K562 (cell line): ENCODE measurements at regions of chr12 and their contacts with region 1.

Region 1: DNA sequence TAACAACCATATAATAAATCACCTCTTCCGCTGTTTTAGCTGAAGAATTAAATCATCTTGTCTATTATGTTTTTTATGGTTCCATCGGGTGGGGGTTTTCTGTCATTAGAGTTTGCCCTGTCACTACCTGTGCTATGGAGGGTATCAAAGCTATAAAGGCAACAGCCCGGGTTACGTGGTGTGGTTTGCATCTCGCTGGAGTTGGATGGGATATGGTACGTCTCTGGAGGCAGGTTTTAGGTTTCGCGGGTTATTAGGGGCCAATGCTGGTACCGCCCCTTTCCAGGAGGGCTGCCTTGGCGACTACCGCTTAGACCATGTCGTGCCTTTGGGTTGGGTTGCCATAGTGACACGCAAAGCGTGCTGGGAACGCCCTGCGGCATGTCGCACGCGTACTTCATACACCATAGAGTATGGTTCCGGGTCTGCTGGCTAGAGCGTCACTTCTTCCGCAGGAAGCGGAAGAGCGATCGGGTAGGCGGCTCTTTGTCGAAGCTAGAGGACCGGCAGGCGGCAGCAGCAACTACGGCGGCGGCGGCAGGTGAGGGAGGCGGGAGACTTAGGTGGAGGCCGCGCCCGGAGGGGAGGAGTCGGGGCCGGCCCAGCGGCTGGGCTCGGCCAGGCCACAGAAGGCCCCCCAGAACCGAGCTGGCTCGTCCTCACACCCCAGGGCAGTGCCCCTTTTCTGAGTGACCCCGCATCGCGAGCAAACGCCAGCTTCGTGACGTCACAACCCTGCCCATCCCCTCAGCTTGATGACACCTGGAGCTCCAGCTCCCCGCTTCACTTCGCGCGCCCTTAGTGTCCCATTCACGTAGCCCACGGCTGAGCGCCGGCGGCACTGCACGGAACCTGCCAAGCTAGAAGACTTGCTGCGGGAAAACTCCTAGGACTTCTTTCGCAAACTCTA is at the start of gene ZC3H10:
- DNase-seq: peak; percentile 87 to 100 (median 90)
- ATAC-seq: peak; percentile 88
- H3K4me3 ChIP-seq: peak within 1 kb of the TSS; percentile 59
- H3K27ac ChIP-seq: peak within 1 kb of the TSS; percentile 97
- H3K4me1 ChIP-seq: peaks cover 16 to 17% of the 10 kb centered on the region in 2 experiments
- H3K27me3 ChIP-seq: no peaks in the 10 kb centered on the region
- CTCF ChIP-seq: peak; percentile 70 to 79 (median 71)
- EP300 ChIP-seq: peak; percentile 69
- POLR2A ChIP-seq: peak; percentile 99
- RAD21 ChIP-seq: peak; percentile 14 to 44; a peak in 3 of 4 replicates
- polyA plus RNA-seq, gene ZC3H10: 0.31 to 0.46 TPM

Region 2: GRCh38 chr12:56071648-56072047 is 46.4 kb before region 1 on chr12:
- CTCF ChIA-PET with region 1: no interaction called
- POLR2A ChIA-PET with region 1: interaction called, 11 read pairs
- in situ Hi-C with region 1: no loop called
- intact Hi-C with region 1: no loop called
- DNase-seq: no peak
- ATAC-seq: no peak
- H3K4me3 ChIP-seq: no peak overlapping the region
- H3K27ac ChIP-seq: no peak overlapping the region
- H3K4me1 ChIP-seq: no peaks in the 10 kb centered on the region; a peak in 1 of 5 replicates
- H3K27me3 ChIP-seq: no peaks in the 10 kb centered on the region
- CTCF ChIP-seq: no peak
- EP300 ChIP-seq: no peak
- POLR2A ChIP-seq: no peak
- RAD21 ChIP-seq: no peak

Region 3: GRCh38 chr12:56127888-56128669 is 10.0 kb after region 1 on chr12 and contains the start of gene ESYT1:
- CTCF ChIA-PET with region 1: no interaction called
- POLR2A ChIA-PET with region 1: interaction called, 74 read pairs
- in situ Hi-C with region 1: no loop called
- intact Hi-C with region 1: no loop called
- DNase-seq: peak; percentile 95 to 100 (median 97)
- ATAC-seq: peak; percentile 89
- H3K4me3 ChIP-seq: peak within 1 kb of the TSS; percentile 92
- H3K27ac ChIP-seq: peak within 1 kb of the TSS; percentile 93
- H3K4me1 ChIP-seq: peaks cover 31 to 46% of the 10 kb centered on the region in 2 experiments
- H3K27me3 ChIP-seq: no peaks in the 10 kb centered on the region
- CTCF ChIP-seq: peak in 2 of 3 experiments; percentile 3 to 14; a peak in 2 of 6 replicates
- EP300 ChIP-seq: no peak; the same call in none of the 2 replicates
- POLR2A ChIP-seq: peak; percentile 94
- RAD21 ChIP-seq: peak in 1 of 2 experiments; percentile 23; a peak in 2 of 4 replicates
- polyA plus RNA-seq, gene ESYT1: 156 to 194 TPM

Region 4: DNA sequence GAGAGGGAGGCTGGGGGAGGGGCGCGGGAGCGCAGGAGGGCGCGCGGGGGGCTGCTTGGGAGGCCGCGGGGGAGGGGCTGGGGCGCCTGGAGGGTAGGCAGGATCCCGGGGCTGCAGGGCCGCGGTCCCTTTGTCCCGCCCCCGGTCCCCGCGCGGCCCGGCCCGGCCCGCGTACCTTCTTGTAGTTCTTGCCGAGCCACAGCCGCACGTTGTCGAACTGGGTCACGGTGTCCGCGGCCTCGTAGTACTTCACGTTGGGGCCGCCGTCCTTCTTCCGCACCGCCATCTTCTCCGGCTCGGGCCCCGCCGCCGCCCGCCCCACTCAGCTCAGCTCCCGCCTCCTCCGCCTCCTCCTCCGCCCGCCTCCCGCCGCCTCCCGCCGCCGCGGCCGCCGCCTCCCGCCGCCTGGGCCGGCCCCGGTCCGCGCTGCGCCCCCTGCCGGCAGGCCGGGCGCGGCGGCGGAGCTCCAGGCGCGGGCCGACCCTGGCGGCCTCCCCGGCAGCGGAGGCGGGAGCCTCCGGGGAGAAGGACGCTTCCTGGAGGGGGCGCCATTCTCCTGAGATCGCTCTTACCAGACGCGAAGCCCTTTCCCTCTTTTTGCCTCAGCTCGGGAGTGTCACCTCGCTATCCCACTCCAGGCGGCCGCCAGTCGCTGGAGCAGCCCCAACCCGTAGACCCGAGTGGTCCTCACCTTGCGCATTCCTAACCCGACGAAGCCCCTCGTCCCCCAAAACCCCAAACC is 71.3 kb after region 1 on chr12 and contains the start of gene SMARCC2:
- CTCF ChIA-PET with region 1: interaction called, 36 read pairs
- POLR2A ChIA-PET with region 1: interaction called, 54 read pairs
- in situ Hi-C with region 1: no loop called
- intact Hi-C with region 1: loop called (anchors 1 kb)
- DNase-seq: peak; percentile 94 to 95 (median 94)
- ATAC-seq: peak; percentile 89
- H3K4me3 ChIP-seq: peak within 1 kb of the TSS; percentile 85
- H3K27ac ChIP-seq: peak within 1 kb of the TSS; percentile 88
- H3K4me1 ChIP-seq: peaks cover 4 to 16% of the 10 kb centered on the region in 2 experiments; a peak in 3 of 5 replicates
- H3K27me3 ChIP-seq: no peaks in the 10 kb centered on the region
- CTCF ChIP-seq: peak; percentile 72 to 95 (median 95)
- EP300 ChIP-seq: peak; percentile 6; the same call in 1 of the 2 replicates
- POLR2A ChIP-seq: peak; percentile 72; the same call in 1 of the 2 replicates
- RAD21 ChIP-seq: peak; percentile 40 to 73
- polyA plus RNA-seq, gene SMARCC2: 11.9 to 29.1 TPM

Region 5: GRCh38 chr12:56266693-56267442 is 148.8 kb after region 1 on chr12 and contains the start of gene COQ10A:
- CTCF ChIA-PET with region 1: interaction called, 4 read pairs
- POLR2A ChIA-PET with region 1: interaction called, 9 read pairs
- in situ Hi-C with region 1: no loop called
- intact Hi-C with region 1: loop called (anchors 1 kb)
- DNase-seq: peak; percentile 92 to 95 (median 93)
- ATAC-seq: peak; percentile 93
- H3K4me3 ChIP-seq: peak within 1 kb of the TSS; percentile 67
- H3K27ac ChIP-seq: peak within 1 kb of the TSS; percentile 77
- H3K4me1 ChIP-seq: peaks cover 11 to 19% of the 10 kb centered on the region in 2 experiments; a peak in 4 of 5 replicates
- H3K27me3 ChIP-seq: no peaks in the 10 kb centered on the region
- CTCF ChIP-seq: peak; percentile 64 to 79 (median 64)
- EP300 ChIP-seq: no peak
- POLR2A ChIP-seq: peak; percentile 90
- RAD21 ChIP-seq: peak; percentile 11 to 48; a peak in 3 of 4 replicates
- polyA plus RNA-seq, gene COQ10A: 3.1 to 5.7 TPM

Region 6: DNA sequence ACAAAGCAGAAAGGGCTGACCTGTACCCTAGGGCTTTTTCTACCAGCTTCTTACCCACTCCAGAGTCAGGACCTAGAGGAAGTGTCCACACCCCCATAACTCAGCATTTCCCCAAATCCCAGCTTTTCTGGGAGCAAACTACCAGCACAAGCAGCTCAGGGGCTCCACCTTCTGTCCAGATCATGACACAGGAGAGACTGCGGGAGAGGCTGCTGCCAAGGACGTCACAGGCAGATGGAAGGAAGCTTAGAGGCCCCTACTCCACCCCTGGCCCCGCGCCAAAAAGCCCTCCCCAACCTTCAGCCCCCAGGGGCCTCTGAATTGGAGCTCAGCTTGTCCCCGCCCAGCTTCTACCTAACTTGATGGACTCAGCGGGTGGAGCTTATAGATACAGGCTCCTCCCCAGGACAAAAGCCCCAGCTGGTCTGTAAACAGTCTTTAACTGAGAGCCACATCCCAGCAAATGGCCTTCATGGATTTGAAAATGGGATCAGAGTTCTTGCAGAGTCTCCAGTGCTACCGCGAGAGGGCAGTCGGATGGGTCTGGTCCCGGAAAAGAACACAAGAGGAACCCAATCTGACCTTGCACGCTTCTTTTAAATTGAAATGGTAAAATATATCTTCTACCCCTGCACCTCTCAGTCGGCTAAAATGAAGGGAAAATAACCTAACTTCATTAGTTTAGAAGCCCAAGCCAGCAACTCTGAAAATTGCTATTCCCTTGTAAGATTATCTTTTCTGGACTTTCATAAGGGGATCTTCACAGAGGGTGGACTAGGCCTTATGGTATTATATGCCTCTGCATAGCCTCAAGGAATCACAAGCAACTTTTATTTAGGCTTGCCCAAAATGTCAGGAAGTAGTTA is 518.9 kb after region 1 on chr12:
- CTCF ChIA-PET with region 1: no interaction called
- POLR2A ChIA-PET with region 1: no interaction called
- in situ Hi-C with region 1: no loop called
- intact Hi-C with region 1: loop called (anchors 5 kb)
- DNase-seq: peak; percentile 90 to 100 (median 94)
- ATAC-seq: peak; percentile 84
- H3K4me3 ChIP-seq: peak overlapping the region; percentile 85
- H3K27ac ChIP-seq: peak overlapping the region; percentile 86
- H3K4me1 ChIP-seq: peaks cover 23 to 38% of the 10 kb centered on the region in 2 experiments
- H3K27me3 ChIP-seq: no peaks in the 10 kb centered on the region
- CTCF ChIP-seq: peak; percentile 79 to 91 (median 88)
- EP300 ChIP-seq: peak; percentile 62
- POLR2A ChIP-seq: peak; percentile 76
- RAD21 ChIP-seq: peak; percentile 66 to 87